ENCODE measurements at regions of chr13 and their contacts with region 1.

Region 1: DNA sequence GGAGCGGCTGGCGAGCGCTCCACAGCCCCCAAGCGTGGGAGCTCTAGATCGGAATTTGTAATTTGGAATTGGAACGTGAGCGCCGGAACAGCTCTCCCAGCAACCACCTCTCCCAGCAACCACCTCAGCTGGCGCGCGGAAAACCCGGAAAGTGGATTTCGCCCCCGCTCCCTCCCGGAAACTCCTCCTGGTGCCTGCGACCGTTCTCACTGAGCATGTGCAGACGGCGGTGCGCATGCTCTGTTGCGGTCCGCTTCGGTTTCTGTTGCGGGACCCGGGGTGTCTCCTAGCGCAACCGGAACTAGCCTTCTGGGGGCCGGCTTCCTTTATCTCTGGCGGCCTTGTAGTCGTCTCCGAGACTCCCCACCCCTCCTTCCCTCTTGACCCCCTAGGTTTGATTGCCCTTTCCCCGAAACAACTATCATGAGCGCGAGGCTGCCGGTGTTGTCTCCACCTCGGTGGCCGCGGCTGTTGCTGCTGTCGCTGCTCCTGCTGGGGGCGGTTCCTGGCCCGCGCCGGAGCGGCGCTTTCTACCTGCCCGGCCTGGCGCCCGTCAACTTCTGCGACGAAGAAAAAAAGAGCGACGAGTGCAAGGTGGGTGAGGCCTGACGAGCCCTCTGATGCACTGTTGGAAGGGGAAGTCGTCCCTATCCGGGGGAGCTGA is at the start of gene TM9SF2:
- DNase-seq: peak; percentile 95
- H3K4me3 ChIP-seq: peak within 1 kb of the TSS; percentile 91 to 96 (median 91)
- H3K27ac ChIP-seq: peak within 1 kb of the TSS; percentile 68
- H3K4me1 ChIP-seq: peaks cover 34% of the 10 kb centered on the region
- H3K27me3 ChIP-seq: no peaks in the 10 kb centered on the region
- CTCF ChIP-seq: no peak
- POLR2A ChIP-seq: peak; percentile 74
- total RNA-seq, gene TM9SF2: 85.9 and 90.0 TPM in 2 replicates

Region 2: GRCh38 chr13:99312493-99312883 is 188.8 kb before region 1 on chr13:
- CTCF ChIA-PET with region 1: no interaction called
- POLR2A ChIA-PET with region 1: no interaction called
- dilution Hi-C with region 1: no loop called
- intact Hi-C with region 1: loop called (anchors 2 kb)
- DNase-seq: no peak
- H3K4me3 ChIP-seq: no peak overlapping the region
- H3K27ac ChIP-seq: peak overlapping the region; percentile 1
- H3K4me1 ChIP-seq: peaks cover 39% of the 10 kb centered on the region
- H3K27me3 ChIP-seq: no peaks in the 10 kb centered on the region
- CTCF ChIP-seq: no peak
- POLR2A ChIP-seq: no peak

Region 3: DNA sequence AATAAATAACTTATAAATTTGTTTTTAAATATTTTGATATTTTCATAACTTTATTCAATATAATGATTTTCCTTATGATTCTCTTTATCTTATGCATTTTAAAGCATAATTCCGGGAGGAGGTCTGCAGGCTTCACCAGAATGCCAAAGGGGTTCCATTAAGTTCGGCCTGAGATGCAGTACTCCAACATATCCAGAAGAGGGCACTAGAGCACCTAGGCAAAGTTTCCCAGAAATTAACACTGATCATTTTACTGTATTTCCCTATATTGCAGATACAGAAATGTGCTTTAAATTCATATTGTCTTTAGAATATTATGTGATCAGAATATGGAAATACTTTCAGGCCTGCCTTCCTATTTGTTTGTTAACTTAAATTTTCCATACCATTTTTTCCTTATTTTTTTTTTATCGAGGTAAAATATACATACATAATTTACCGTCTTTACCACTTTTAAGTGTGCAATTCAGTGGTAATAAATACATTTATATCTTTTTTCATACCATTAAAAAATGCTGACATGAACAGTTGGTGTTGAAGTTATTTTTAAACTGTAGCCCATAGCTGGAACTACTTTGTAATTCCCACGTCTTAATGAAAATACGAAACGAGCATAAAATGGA is 58.9 kb before region 1 on chr13:
- CTCF ChIA-PET with region 1: interaction called, 81 read pairs
- POLR2A ChIA-PET with region 1: no interaction called
- dilution Hi-C with region 1: no loop called
- intact Hi-C with region 1: loop called (anchors 1 kb)
- DNase-seq: peak; percentile 58
- H3K4me3 ChIP-seq: no peak overlapping the region
- H3K27ac ChIP-seq: no peak overlapping the region
- H3K4me1 ChIP-seq: no peaks in the 10 kb centered on the region
- H3K27me3 ChIP-seq: peaks cover 13 to 29% of the 10 kb centered on the region in 2 experiments
- CTCF ChIP-seq: peak; percentile 66 to 77
- POLR2A ChIP-seq: no peak

Region 4: DNA sequence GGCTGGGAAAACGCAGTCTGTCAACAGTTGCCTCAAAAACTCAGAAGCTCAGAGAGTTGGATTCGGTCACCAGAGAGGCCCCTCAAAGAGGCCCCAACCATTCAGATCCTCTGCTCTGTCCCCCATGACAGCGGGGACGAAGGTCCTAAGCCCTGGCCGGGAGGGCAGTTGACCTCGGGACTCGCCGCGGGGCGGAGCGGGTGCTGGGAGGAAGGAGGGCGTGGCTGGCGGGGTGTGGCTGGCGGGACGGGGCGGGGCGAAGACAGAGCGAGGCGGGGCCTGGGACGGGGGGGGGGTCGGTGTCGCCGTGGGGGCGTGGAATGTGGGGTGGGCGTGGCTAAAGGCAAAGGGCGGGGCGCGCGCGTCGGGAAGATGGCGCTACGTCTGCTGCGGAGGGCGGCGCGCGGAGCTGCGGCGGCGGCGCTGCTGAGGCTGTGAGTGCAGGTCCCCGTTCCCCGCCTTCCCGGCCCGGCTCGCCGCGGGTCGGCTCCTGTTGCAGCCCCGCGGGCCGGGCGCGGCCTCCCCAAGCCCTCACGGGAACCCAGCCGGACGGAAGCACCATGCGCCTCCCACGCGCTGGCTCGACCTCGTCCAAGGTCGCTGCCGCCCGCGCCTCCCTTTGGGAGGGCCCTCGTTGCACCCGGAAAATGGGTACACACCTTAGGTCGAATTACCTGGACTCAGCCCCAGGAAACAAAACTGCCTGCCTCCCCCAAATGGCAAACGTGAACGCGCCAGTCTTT is 105.2 kb after region 1 on chr13:
- CTCF ChIA-PET with region 1: interaction called, 4 read pairs
- POLR2A ChIA-PET with region 1: no interaction called
- dilution Hi-C with region 1: no loop called
- intact Hi-C with region 1: loop called (anchors 1 kb)
- DNase-seq: peak; percentile 81
- H3K4me3 ChIP-seq: peak within 1 kb of the TSS; percentile 53 to 92 (median 68)
- H3K27ac ChIP-seq: peak within 1 kb of the TSS; percentile 25
- H3K4me1 ChIP-seq: peaks cover 9% of the 10 kb centered on the region
- H3K27me3 ChIP-seq: peaks cover 0 to 4% of the 10 kb centered on the region in 2 experiments
- CTCF ChIP-seq: peak in 1 of 2 donors; percentile 8
- POLR2A ChIP-seq: peak; percentile 81